Endothelial cell of umbilical vein (primary cell): ENCODE measurements at regions of chr3 and their contacts with region 1.

Region 1: GRCh38 chr3:179147873-179148615 is at the start of gene PIK3CA:
- DNase-seq: peak; percentile 99
- H3K4me3 ChIP-seq: peak within 1 kb of the TSS; percentile 83 to 99 (median 93)
- H3K27ac ChIP-seq: peak within 1 kb of the TSS; percentile 75
- H3K4me1 ChIP-seq: peaks cover 15% of the 10 kb centered on the region
- H3K27me3 ChIP-seq: no peaks in the 10 kb centered on the region
- CTCF ChIP-seq: no peak
- POLR2A ChIP-seq: peak; percentile 43
- total RNA-seq, gene PIK3CA: 25.6 and 25.8 TPM in 2 replicates

Region 2: DNA sequence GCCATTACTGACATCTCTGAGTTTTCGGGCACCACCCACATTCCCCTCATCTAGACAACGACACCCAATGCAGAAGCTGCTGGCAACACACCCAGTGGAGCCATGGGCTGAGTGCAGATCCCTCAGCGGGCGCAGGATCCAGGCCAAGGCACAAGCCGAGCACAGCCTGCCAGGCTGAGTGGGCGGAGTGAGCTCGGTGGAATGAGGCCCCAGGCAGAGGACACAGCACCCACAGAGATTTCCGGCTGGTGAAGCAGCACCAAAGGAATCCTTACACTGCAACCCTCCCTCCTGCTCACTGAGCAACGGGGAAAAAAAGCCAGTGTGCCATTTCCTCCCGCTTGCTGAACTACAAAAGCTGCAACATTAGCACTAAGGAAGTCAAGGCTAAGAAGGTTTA is 110.7 kb before region 1 on chr3:
- CTCF ChIA-PET with region 1: no interaction called
- POLR2A ChIA-PET with region 1: no interaction called
- dilution Hi-C with region 1: no loop called
- intact Hi-C with region 1: no loop called
- DNase-seq: no peak
- H3K4me3 ChIP-seq: no peak overlapping the region
- H3K27ac ChIP-seq: no peak overlapping the region
- H3K4me1 ChIP-seq: no peaks in the 10 kb centered on the region
- H3K27me3 ChIP-seq: no peaks in the 10 kb centered on the region
- CTCF ChIP-seq: no peak
- POLR2A ChIP-seq: no peak

Region 3: GRCh38 chr3:179108086-179108485 is 40.0 kb before region 1 on chr3:
- CTCF ChIA-PET with region 1: interaction called, 12 read pairs
- POLR2A ChIA-PET with region 1: no interaction called
- dilution Hi-C with region 1: no loop called
- intact Hi-C with region 1: loop called (anchors 5 kb)
- DNase-seq: peak; percentile 15
- H3K4me3 ChIP-seq: no peak overlapping the region
- H3K27ac ChIP-seq: no peak overlapping the region
- H3K4me1 ChIP-seq: peaks cover 9% of the 10 kb centered on the region
- H3K27me3 ChIP-seq: no peaks in the 10 kb centered on the region
- CTCF ChIP-seq: no peak
- POLR2A ChIP-seq: no peak

Region 4: DNA sequence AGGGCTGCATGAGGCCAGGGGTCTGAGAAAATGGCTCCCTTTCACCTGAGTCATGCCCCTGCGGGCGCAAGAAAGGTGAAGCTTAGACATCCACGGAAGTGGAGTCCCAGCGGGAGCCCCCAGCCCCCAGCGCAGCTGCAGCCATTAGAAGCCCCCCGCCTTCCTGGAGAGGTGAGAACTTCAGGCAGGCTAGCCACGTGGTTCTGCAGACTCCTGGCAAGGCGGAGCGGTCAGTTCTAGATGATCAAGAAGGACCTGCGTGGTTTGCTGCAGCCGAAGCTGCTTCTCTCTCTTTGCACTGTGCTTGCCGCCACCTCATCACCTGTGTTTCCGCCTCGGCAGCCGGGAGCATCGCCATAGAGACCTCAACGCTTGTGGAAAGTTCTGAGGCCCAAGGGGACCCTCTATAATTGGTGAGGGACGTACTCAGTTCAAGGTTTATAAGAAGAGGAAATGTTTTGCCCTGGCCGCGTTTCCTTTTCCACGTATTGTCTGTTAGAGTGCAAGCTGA is 118.7 kb after region 1 on chr3:
- CTCF ChIA-PET with region 1: interaction called, 23 read pairs
- POLR2A ChIA-PET with region 1: interaction called, 5 read pairs
- dilution Hi-C with region 1: no loop called
- intact Hi-C with region 1: loop called (anchors 1 kb)
- DNase-seq: peak; percentile 77
- H3K4me3 ChIP-seq: no peak overlapping the region
- H3K27ac ChIP-seq: no peak overlapping the region
- H3K4me1 ChIP-seq: peaks cover 22% of the 10 kb centered on the region
- H3K27me3 ChIP-seq: no peaks in the 10 kb centered on the region
- CTCF ChIP-seq: no peak
- POLR2A ChIP-seq: no peak

Region 5: GRCh38 chr3:179322286-179323196 is 174.5 kb after region 1 on chr3 and contains the start of gene ZNF639:
- CTCF ChIA-PET with region 1: interaction called, 22 read pairs
- POLR2A ChIA-PET with region 1: interaction called, 3 read pairs
- dilution Hi-C with region 1: no loop called
- intact Hi-C with region 1: loop called (anchors 1 kb)
- DNase-seq: peak; percentile 90
- H3K4me3 ChIP-seq: peak within 1 kb of the TSS; percentile 70 to 90 (median 87)
- H3K27ac ChIP-seq: peak within 1 kb of the TSS; percentile 74
- H3K4me1 ChIP-seq: peaks cover 19% of the 10 kb centered on the region
- H3K27me3 ChIP-seq: no peaks in the 10 kb centered on the region
- CTCF ChIP-seq: peak; percentile 83 to 88
- POLR2A ChIP-seq: peak; percentile 36
- total RNA-seq, gene ZNF639: 28.4 and 30.5 TPM in 2 replicates

Region 6: DNA sequence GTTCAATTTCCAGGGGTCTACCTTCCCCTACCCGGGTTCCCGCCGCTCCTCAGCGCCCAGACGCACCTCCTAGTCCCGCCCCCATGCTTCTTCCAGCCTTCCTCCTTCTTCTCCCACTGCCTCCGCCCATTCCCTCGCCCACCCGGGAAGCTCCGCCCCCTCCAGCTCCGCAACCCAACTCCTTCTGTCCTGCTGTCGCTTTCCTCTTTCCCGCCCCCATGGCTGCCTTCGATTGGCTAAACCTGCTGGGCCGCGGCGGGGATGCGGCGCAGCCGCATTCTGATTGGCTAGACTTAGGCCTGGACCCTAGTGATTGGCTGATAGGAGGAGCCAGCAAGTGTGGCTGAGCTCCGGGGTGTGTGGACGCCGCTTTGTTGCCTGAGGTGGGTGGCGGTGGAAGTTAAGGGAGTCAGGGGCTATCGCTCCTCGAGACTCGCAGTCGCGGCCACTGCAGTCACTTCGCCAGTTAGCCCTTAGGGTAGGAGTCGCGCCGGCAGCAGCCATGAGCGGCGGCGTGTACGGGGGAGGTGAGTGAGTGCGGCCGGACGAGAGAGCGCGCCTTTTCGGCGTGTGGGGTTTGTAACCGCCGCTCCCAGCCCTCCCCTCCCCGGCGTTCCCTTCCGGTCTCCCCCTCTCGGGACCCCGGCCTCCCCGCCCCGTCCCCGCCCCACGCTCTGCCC is 414.7 kb after region 1 on chr3 and contains the start of gene ACTL6A:
- CTCF ChIA-PET with region 1: no interaction called
- POLR2A ChIA-PET with region 1: no interaction called
- dilution Hi-C with region 1: no loop called
- intact Hi-C with region 1: loop called (anchors 1 kb)
- DNase-seq: peak; percentile 100
- H3K4me3 ChIP-seq: peak within 1 kb of the TSS; percentile 55 to 75 (median 70)
- H3K27ac ChIP-seq: peak within 1 kb of the TSS; percentile 25
- H3K4me1 ChIP-seq: peaks cover 7% of the 10 kb centered on the region
- H3K27me3 ChIP-seq: no peaks in the 10 kb centered on the region
- CTCF ChIP-seq: no peak
- POLR2A ChIP-seq: peak; percentile 73
- total RNA-seq, gene ACTL6A: 63.1 and 68.3 TPM in 2 replicates